ENCODE measurements at regions of chr14 and their contacts with region 1.

Region 1: GRCh38 chr14:64303471-64303917 is 9.3 kb upstream of the ESR2 start:
- DNase-seq: peak; percentile 28
- ATAC-seq: peak; percentile 93
- H3K4me3 ChIP-seq: no peak overlapping the region
- H3K27ac ChIP-seq: no peak overlapping the region
- H3K4me1 ChIP-seq: no peaks in the 10 kb centered on the region
- H3K27me3 ChIP-seq: no peaks in the 10 kb centered on the region
- CTCF ChIP-seq: peak; percentile 66 to 72 (median 67)
- EP300 ChIP-seq: no peak
- POLR2A ChIP-seq: no peak
- RAD21 ChIP-seq: peak; percentile 88

Region 2: GRCh38 chr14:63800651-63801375 is 502.7 kb before region 1 on chr14:
- CTCF ChIA-PET with region 1: interaction called, 74 read pairs
- POLR2A ChIA-PET with region 1: no interaction called
- RAD21 ChIA-PET with region 1: interaction called, 13 read pairs
- SMC1A ChIA-PET with region 1: interaction called, 22 read pairs
- in situ Hi-C with region 1: loop called (anchors 5 kb)
- intact Hi-C with region 1: loop called (anchors 2 kb)
- DNase-seq: no peak
- ATAC-seq: no peak
- H3K4me3 ChIP-seq: no peak overlapping the region
- H3K27ac ChIP-seq: no peak overlapping the region
- H3K4me1 ChIP-seq: no peaks in the 10 kb centered on the region
- H3K27me3 ChIP-seq: no peaks in the 10 kb centered on the region
- CTCF ChIP-seq: no peak
- EP300 ChIP-seq: no peak
- POLR2A ChIP-seq: no peak
- RAD21 ChIP-seq: no peak

Region 3: DNA sequence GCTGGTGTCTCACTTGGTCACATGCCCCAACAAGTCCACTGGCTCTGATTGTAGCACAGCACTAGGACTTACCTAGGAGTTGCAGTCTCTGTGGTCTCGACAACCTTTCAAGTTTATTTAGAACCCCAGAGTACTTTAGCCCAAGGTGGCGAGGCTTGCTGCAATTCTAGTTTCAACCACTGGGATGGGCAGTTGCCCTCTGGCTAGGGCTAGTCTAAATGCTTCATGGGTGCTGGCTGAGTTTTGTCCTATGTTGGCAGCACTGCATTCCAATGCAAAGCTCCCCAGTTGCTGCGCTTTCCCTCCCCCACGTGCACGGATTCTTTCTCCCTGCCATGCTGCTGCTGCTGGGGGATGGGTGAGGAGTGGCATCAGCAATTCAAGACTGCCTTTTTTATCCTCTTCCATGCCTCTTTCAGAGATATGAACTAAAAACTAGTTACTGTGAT is 242.8 kb before region 1 on chr14:
- CTCF ChIA-PET with region 1: interaction called, 20 read pairs
- POLR2A ChIA-PET with region 1: no interaction called
- RAD21 ChIA-PET with region 1: interaction called, 3 read pairs
- SMC1A ChIA-PET with region 1: interaction called, 3 read pairs
- in situ Hi-C with region 1: no loop called
- intact Hi-C with region 1: loop called (anchors 10 kb)
- DNase-seq: no peak
- ATAC-seq: peak; percentile 92
- H3K4me3 ChIP-seq: no peak overlapping the region
- H3K27ac ChIP-seq: no peak overlapping the region
- H3K4me1 ChIP-seq: no peaks in the 10 kb centered on the region
- H3K27me3 ChIP-seq: no peaks in the 10 kb centered on the region
- CTCF ChIP-seq: peak; percentile 34 to 67 (median 50); a peak in 5 of 6 replicates
- EP300 ChIP-seq: no peak
- POLR2A ChIP-seq: no peak
- RAD21 ChIP-seq: peak; percentile 42

Region 4: DNA sequence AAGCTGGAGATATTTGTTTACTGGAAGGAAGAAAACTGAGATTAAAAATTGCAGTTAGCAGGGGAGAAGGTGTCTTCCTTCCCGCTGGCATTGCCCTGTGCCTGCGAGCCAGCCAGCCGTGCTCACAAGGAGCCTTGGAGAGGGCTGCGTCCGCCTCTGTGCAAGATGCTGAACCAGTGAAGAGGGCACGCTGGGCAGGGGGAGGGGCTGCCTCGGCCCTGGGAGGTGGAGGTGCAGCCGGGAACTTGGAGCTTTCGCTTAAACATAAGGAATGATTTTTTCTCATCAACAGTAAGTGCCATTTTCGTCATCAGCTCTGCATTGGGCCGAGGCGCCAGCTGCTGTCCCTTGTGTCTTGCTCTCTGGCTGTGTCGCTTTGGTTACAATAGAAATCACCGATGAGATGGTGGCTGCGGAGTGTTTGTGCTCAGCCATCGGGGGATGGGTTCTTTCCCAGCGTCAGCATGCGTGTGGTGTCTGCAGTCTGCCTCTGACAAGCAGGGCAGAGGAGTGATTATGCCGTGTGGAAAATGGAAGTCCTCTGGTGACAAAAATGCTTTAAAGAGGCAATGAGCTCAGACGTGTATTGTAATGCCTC is 106.6 kb before region 1 on chr14:
- CTCF ChIA-PET with region 1: interaction called, 12 read pairs
- POLR2A ChIA-PET with region 1: no interaction called
- RAD21 ChIA-PET with region 1: no interaction called
- SMC1A ChIA-PET with region 1: no interaction called
- in situ Hi-C with region 1: no loop called
- intact Hi-C with region 1: no loop called
- DNase-seq: no peak
- ATAC-seq: peak; percentile 81
- H3K4me3 ChIP-seq: peak overlapping the region; percentile 27; the same call in 1 of the 2 replicates
- H3K27ac ChIP-seq: peak overlapping the region; percentile 68
- H3K4me1 ChIP-seq: peaks cover 30% of the 10 kb centered on the region
- H3K27me3 ChIP-seq: no peaks in the 10 kb centered on the region
- CTCF ChIP-seq: no peak
- EP300 ChIP-seq: peak; percentile 52 to 53; a peak in 3 of 4 replicates
- POLR2A ChIP-seq: no peak; the same call in 1 of the 2 replicates
- RAD21 ChIP-seq: no peak

Region 5: GRCh38 chr14:64244279-64244678 is 59.2 kb before region 1 on chr14:
- CTCF ChIA-PET with region 1: no interaction called
- POLR2A ChIA-PET with region 1: no interaction called
- RAD21 ChIA-PET with region 1: no interaction called
- SMC1A ChIA-PET with region 1: no interaction called
- in situ Hi-C with region 1: no loop called
- intact Hi-C with region 1: no loop called
- DNase-seq: no peak
- ATAC-seq: no peak
- H3K4me3 ChIP-seq: no peak overlapping the region
- H3K27ac ChIP-seq: no peak overlapping the region
- H3K4me1 ChIP-seq: no peaks in the 10 kb centered on the region
- H3K27me3 ChIP-seq: no peaks in the 10 kb centered on the region
- CTCF ChIP-seq: no peak
- EP300 ChIP-seq: no peak
- POLR2A ChIP-seq: no peak
- RAD21 ChIP-seq: no peak

Measured in GM12878 (cell line).